ENCODE measurements at regions of chr17 and their contacts with region 1.

Region 1: GRCh38 chr17:48944519-48945260 is at the start of gene SNF8:
- DNase-seq: peak; percentile 91
- H3K4me3 Mint-ChIP-seq: peak within 1 kb of the TSS; percentile 100
- H3K27ac Mint-ChIP-seq: peak within 1 kb of the TSS; percentile 96
- H3K4me1 Mint-ChIP-seq: peaks cover 12% of the 10 kb centered on the region
- H3K27me3 Mint-ChIP-seq: no peaks in the 10 kb centered on the region
- total RNA-seq, gene SNF8: 145 and 152 TPM in 2 replicates

Region 2: GRCh38 chr17:48871551-48872351 is 72.9 kb before region 1 on chr17:
- intact Hi-C with region 1: no loop called
- DNase-seq: no peak
- H3K4me3 Mint-ChIP-seq: no peak overlapping the region
- H3K27ac Mint-ChIP-seq: no peak overlapping the region
- H3K4me1 Mint-ChIP-seq: peaks cover 10% of the 10 kb centered on the region
- H3K27me3 Mint-ChIP-seq: peaks cover 4% of the 10 kb centered on the region

Region 3: GRCh38 chr17:48915459-48916282 is 29.0 kb before region 1 on chr17:
- intact Hi-C with region 1: loop called (anchors 1 kb)
- DNase-seq: peak; percentile 39
- H3K4me3 Mint-ChIP-seq: peak overlapping the region; percentile 33
- H3K27ac Mint-ChIP-seq: peak overlapping the region; percentile 98
- H3K4me1 Mint-ChIP-seq: peaks cover 43% of the 10 kb centered on the region
- H3K27me3 Mint-ChIP-seq: no peaks in the 10 kb centered on the region

Region 4: DNA sequence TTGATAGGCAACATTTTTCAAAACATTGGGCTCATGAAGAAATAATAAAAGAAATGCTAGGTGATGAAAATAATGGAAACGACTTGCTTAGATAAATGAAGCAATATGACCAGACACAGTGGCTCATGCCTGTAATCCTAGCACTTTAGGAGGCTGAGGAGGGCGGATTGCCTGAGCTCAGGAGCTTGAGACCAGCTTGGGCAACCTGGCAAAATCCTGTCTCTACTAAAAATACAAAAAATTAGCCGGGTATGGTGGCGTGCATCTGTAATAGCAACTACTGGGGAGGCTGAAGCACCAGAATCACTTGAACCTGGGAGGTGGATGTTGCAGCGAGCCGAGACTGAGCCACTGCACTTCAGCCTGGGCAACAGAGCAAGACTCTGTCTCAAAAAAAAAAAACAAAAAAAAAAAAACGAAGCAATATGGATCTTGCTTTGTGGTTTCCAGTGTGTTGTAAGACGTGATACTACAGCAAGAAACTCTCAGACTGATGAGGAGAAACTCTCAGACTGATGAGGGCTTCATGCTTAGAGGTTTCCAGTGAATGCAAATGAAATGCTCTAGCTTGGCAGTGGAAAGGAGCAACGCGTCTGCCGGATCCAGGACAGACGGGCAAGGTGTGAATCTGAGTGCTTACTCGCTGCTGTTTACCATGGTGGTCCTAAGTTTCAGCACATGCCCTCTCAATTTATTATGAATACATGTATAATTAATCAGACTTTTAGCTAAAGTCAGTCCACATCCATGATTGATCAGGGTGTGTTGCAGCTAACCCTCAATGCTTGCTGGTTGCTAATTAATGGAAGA is 41.0 kb after region 1 on chr17:
- intact Hi-C with region 1: no loop called
- DNase-seq: no peak
- H3K4me3 Mint-ChIP-seq: no peak overlapping the region
- H3K27ac Mint-ChIP-seq: no peak overlapping the region
- H3K4me1 Mint-ChIP-seq: no peaks in the 10 kb centered on the region
- H3K27me3 Mint-ChIP-seq: peaks cover 17% of the 10 kb centered on the region

Measured in activated T-helper 2 cell treated with anti-CD3 and anti-CD28 coated beads, Interferon-gamma antibody, Interleukin-2, Interleukin-4, amounts not matched to agents 10 μg/mL and 5 μg/mL and 100 μg/mL, durations not matched to agents 14 hours and 24 hours and 36 hours (primary cell).